ENCODE measurements at regions of chr3 and their contacts with region 1.

Region 1: GRCh38 chr3:98786364-98787006 is 23.3 kb downstream of the ST3GAL6 start:
- DNase-seq: peak; percentile 91 to 95
- H3K4me3 ChIP-seq: no peak overlapping the region
- H3K4me3 Mint-ChIP-seq: peak overlapping the region; percentile 55
- H3K27ac Mint-ChIP-seq: peak overlapping the region; percentile 81
- H3K4me1 ChIP-seq: peaks cover 45% of the 10 kb centered on the region
- H3K4me1 Mint-ChIP-seq: peaks cover 25% of the 10 kb centered on the region
- H3K27me3 ChIP-seq: no peaks in the 10 kb centered on the region
- H3K27me3 Mint-ChIP-seq: no peaks in the 10 kb centered on the region
- CTCF ChIP-seq: no peak

Region 2: DNA sequence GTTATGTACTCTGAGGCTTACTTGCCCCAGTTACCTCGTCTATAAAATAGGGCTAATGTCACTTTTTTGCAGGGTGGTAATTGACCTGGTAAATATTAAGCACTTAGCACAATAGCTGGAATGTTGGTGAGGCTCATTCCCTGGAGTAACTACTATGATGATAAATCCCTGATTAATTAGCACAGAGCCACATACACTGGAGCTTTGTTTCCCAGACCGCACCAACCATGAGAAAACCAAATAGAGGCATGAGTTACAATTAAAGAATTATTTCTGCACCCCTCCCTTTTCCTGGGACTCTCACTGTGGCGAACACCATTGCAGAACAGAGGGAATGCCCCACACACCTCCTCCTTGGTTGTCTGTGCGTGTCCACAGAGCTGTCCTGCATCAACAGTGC is 116.5 kb before region 1 on chr3:
- CTCF ChIA-PET with region 1: no interaction called
- POLR2A ChIA-PET with region 1: no interaction called
- intact Hi-C with region 1: no loop called
- DNase-seq: no peak
- H3K4me3 ChIP-seq: no peak overlapping the region
- H3K4me3 Mint-ChIP-seq: no peak overlapping the region
- H3K27ac Mint-ChIP-seq: no peak overlapping the region
- H3K4me1 ChIP-seq: no peaks in the 10 kb centered on the region
- H3K4me1 Mint-ChIP-seq: no peaks in the 10 kb centered on the region
- H3K27me3 ChIP-seq: no peaks in the 10 kb centered on the region
- H3K27me3 Mint-ChIP-seq: no peaks in the 10 kb centered on the region
- CTCF ChIP-seq: no peak

Region 3: GRCh38 chr3:98705706-98706105 is 80.8 kb before region 1 on chr3:
- CTCF ChIA-PET with region 1: no interaction called
- POLR2A ChIA-PET with region 1: no interaction called
- intact Hi-C with region 1: loop called (anchors 1 kb)
- DNase-seq: peak in 1 of 2 experiments; percentile 22
- H3K4me3 ChIP-seq: no peak overlapping the region
- H3K4me3 Mint-ChIP-seq: no peak overlapping the region
- H3K27ac Mint-ChIP-seq: no peak overlapping the region
- H3K4me1 ChIP-seq: peaks cover 48% of the 10 kb centered on the region
- H3K4me1 Mint-ChIP-seq: peaks cover 54% of the 10 kb centered on the region
- H3K27me3 ChIP-seq: no peaks in the 10 kb centered on the region
- H3K27me3 Mint-ChIP-seq: no peaks in the 10 kb centered on the region
- CTCF ChIP-seq: no peak

Region 4: DNA sequence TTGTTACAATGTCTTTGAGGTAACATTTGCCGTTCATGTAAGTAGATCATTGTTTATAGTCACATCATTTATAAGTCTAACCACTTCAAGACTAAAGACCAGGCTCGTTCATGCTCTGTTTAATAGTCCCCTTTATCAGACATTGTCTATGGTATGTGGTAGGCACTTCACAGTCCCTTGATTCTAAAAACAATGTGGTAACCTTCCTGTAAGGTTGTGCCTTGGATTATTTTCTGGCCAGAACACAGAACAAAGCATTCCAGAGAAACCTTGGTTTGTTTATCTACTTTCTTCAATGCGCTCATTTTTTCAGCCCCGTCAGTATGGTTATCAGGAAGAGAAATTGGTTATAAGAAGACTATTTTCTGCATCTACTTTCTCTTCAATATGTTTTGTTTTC is 39.6 kb before region 1 on chr3:
- CTCF ChIA-PET with region 1: no interaction called
- POLR2A ChIA-PET with region 1: no interaction called
- intact Hi-C with region 1: loop called (anchors 2 kb)
- DNase-seq: peak in 1 of 2 experiments; percentile 60
- H3K4me3 ChIP-seq: no peak overlapping the region
- H3K4me3 Mint-ChIP-seq: peak overlapping the region; percentile 60
- H3K27ac Mint-ChIP-seq: peak overlapping the region; percentile 77
- H3K4me1 ChIP-seq: peaks cover 86% of the 10 kb centered on the region
- H3K4me1 Mint-ChIP-seq: peaks cover 61% of the 10 kb centered on the region
- H3K27me3 ChIP-seq: no peaks in the 10 kb centered on the region
- H3K27me3 Mint-ChIP-seq: no peaks in the 10 kb centered on the region
- CTCF ChIP-seq: no peak

Measured in Caco-2 (cell line).